ENCODE measurements at regions of chr3 and their contacts with region 1.

Region 1: GRCh38 chr3:50337191-50337841 is 3.3 kb downstream of the RASSF1 start:
- DNase-seq: peak; percentile 99 to 100
- H3K4me3 ChIP-seq: peak overlapping the region; percentile 72 to 96
- H3K27ac ChIP-seq: peak overlapping the region; percentile 99
- H3K4me1 ChIP-seq: peaks cover 25 to 70% of the 10 kb centered on the region in 2 donors
- H3K27me3 ChIP-seq: no peaks in the 10 kb centered on the region
- CTCF ChIP-seq: no peak

Region 2: DNA sequence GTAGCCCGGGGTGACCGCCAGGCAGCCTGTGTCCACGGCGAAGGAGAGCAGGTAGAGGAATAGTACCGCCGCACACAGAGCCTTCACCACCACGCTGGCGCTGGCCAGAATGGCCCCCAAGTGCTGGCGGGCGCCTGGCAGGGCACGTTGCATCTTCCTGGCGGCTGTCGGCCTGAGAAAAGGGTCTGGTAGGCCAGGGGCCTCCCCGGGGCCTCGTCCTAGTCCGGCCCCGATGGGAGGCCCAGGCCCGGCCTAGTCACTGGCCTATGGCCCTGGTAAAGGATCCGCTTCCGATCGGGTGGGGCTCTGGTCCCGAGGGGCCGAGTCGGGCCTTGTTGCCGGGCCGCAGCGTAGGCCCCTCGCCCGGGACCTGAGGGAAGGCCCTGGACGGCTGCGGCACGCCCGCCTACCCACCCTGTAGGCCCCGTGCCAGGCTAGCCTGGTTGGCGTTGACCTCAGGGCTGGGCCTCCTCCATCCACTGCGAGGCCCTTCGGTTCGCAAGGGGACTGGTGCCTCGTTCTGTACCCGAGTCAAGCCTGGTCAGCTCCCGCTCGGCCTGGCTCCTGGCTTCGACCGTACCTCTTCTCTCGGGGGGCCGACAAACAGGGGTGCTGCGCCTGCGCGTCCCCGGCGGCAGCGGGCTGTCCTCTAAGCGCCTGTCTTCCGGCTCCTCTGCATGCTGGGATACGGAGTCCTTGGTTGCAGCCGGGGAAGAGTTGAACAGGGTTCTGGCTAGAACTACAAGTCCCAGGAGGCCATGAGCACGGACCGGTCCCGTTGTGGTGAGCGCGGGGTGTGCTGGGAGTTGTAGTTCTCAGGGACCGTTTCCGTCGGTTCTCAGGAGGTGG is 21.8 kb after region 1 on chr3 and contains the start of gene TMEM115:
- intact Hi-C with region 1: loop called (anchors 1 kb)
- DNase-seq: peak; percentile 96 to 99
- H3K4me3 ChIP-seq: peak within 1 kb of the TSS; percentile 87 to 92
- H3K27ac ChIP-seq: peak within 1 kb of the TSS; percentile 89 to 90
- H3K4me1 ChIP-seq: peaks cover 14 to 33% of the 10 kb centered on the region in 2 donors
- H3K27me3 ChIP-seq: no peaks in the 10 kb centered on the region
- CTCF ChIP-seq: no peak
- total RNA-seq, gene TMEM115: 55.7 TPM

Region 3: DNA sequence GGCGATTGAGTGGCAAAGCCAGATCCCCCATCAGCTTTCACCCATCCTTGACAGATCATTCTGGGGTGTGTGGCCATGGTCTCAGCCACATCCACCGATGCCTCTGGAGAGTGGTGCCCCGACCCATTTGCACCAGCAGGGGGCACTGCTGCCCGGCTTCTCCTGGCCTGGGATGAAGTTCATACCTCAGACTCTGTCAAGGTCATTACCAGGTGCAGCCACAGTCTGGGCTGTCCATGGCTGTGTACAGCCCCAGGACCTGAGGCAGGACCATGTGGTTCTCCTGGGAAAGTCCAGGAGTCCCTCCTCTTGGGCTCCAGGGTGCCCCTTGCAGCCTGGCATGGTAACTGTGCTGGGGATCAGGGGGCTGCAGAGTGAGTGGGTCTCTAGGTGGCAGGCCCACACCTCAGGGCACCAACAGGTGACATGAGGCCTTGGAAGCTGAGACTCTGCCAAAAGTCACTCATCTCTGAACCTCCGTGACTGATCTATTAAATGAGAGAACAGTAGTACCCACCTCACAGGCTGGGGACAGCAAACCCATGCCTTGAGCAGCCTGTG is 98.9 kb after region 1 on chr3:
- intact Hi-C with region 1: no loop called
- DNase-seq: peak in 1 of 2 donors; percentile 72
- H3K4me3 ChIP-seq: no peak overlapping the region
- H3K27ac ChIP-seq: no peak overlapping the region
- H3K4me1 ChIP-seq: no peaks in the 10 kb centered on the region
- H3K27me3 ChIP-seq: no peaks in the 10 kb centered on the region
- CTCF ChIP-seq: peak; percentile 67 to 74 (median 72)

Region 4: GRCh38 chr3:50532058-50532705 is 194.9 kb after region 1 on chr3:
- intact Hi-C with region 1: no loop called
- DNase-seq: no peak
- H3K4me3 ChIP-seq: no peak overlapping the region
- H3K27ac ChIP-seq: peak overlapping the region in 1 of 2 donors; percentile 56
- H3K4me1 ChIP-seq: no peaks in the 10 kb centered on the region
- H3K27me3 ChIP-seq: no peaks in the 10 kb centered on the region
- CTCF ChIP-seq: no peak

Measured in ascending aorta (tissue), 2 donors.